Heart right ventricle (tissue), 16 donors: ENCODE measurements at regions of chr20 and their contacts with region 1.

Region 1: DNA sequence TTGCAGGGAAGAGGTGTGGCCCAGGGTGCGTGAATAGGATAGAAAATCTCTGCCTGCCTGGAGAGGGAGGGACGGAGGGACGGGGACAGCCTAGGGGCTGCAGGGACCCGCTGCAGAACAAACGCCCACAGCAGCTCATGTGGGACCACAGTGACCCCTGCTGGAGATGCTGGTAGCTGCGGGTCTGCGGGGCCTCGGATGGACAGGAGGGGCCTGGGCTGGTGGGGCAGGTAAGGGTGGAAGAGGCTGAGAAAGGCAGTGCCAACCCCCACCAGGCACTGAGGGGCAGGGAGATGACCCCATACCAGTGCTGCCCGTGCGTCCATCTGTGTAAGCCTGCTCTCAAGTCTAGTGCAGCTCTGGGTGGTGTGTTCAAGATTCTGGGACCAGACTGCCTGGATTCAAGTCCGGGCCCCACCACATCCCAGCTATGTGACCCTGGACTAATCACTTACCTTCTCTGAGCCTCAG is 39.4 kb downstream of the KIAA1755 start:
- DNase-seq: peak; percentile 58 to 78
- ATAC-seq: peak; percentile 34 to 77 (median 64)
- H3K4me3 ChIP-seq: no peak overlapping the region
- H3K27ac ChIP-seq: no peak overlapping the region
- H3K4me1 ChIP-seq: peaks cover 0 to 22% (median 3%) of the 10 kb centered on the region in 9 donors
- H3K27me3 ChIP-seq: no peaks in the 10 kb centered on the region
- CTCF ChIP-seq: peak; percentile 82 to 94 (median 91)

Region 2: GRCh38 chr20:37651932-37652331 is 569.2 kb before region 1 on chr20:
- intact Hi-C with region 1: loop called in 1 of 10 experiments (anchors 10 kb)
- DNase-seq: peak; percentile 26 to 35
- ATAC-seq: peak; percentile 44 to 91 (median 82)
- H3K4me3 ChIP-seq: no peak overlapping the region
- H3K27ac ChIP-seq: no peak overlapping the region
- H3K4me1 ChIP-seq: peaks cover 0 to 17% (median 7%) of the 10 kb centered on the region in 9 donors
- H3K27me3 ChIP-seq: no peaks in the 10 kb centered on the region
- CTCF ChIP-seq: peak; percentile 7 to 59 (median 42)

Region 3: DNA sequence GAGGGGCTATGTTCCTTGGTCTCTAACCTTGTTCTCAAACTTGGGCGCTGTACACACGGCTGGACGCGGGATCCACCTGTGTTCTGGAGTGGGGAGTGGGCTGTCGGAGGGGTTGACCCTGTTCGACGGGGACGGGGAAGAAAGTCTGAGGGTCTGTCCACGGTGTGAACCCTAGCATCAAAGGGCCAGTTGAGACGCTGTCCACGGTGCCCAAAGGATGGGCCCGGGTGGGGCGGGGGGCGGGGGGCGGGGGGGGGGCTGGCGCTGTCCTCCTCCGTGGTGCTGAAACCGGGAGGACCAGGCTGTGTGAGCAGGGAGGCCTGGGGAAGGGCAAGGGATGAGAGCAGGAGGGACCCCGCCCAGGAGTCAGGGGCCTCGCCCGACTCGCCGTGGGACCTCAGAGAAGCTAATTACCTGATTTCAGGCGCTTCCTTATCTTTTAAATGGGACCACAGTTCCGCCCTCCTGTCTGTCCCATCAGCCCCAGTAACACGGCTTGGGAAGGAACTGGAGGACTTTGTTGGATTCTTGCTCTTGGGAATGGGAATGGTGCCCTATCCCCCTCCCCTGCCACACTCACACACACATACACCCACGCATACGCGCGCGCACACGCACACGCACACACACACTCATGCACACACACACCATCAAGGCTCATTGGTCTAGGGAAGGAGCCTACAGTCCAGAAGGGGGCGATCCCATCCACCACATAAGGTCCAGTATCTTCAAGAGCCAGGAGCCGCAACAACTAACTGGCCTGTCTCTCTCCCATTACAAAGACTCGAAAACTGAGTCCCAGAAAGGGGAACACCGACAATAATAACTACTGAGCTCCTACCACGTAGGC is 319.3 kb before region 1 on chr20:
- intact Hi-C with region 1: loop called in 3 of 10 experiments (anchors 5 to 10 kb)
- DNase-seq: no peak
- ATAC-seq: peak; percentile 47 to 84 (median 71)
- H3K4me3 ChIP-seq: peak overlapping the region in 7 of 10 donors; percentile 36 to 47 (median 41)
- H3K27ac ChIP-seq: no peak overlapping the region
- H3K4me1 ChIP-seq: peaks cover 1 to 24% (median 12%) of the 10 kb centered on the region in 9 donors
- H3K27me3 ChIP-seq: peaks cover 9 to 71% (median 64%) of the 10 kb centered on the region in 7 donors
- CTCF ChIP-seq: peak in 7 of 9 donors; percentile 21 to 52 (median 35)

Region 4: DNA sequence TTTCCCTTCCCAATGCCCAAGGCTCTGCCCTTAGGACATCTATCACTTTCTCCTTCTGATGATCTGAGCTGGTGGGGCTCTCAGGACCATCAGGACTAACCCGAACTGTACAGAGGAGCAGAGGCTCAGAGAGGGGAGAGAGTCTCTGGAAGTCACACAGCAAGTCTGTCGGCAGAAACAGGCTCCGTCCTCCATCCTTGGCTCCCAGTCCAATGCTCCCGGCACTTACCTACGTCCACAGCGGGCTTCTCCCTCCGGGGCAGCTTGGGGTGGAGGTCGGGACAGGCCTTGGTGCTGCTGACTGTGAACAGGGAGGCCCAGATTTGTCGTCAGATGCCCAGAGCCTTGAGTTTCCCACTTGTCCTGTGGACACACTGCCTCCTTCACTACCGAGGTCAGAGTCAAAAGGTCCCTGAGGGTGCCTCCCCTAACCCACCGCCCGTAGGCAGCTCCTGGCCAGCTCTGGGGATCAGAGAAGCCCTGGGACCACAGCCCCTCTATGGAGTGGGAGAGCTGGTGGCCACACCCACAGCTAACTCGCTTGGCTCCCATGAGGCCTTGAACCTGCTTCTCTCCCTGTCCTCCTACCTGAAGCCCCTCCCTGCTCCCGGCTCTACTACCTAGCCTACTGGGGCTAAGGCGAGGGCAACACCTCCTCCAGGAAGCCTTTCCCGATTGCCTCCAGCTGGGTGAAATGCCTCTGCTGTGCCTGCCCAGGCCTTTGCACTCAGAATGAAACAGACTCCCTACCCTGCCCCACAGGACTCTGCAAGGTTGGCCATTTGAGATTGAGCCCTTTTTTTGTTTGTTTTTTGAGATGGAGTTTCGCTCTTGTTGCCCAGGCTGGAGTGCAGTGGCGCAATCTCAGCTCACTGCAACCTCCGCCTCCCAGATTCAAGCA is 295.6 kb before region 1 on chr20:
- intact Hi-C with region 1: no loop called
- DNase-seq: no peak
- ATAC-seq: no peak
- H3K4me3 ChIP-seq: no peak overlapping the region
- H3K27ac ChIP-seq: no peak overlapping the region
- H3K4me1 ChIP-seq: no peaks in the 10 kb centered on the region
- H3K27me3 ChIP-seq: peaks cover 0 to 15% (median 2%) of the 10 kb centered on the region in 7 donors
- CTCF ChIP-seq: no peak

Region 5: GRCh38 chr20:38165089-38165989 is 55.8 kb before region 1 on chr20 and contains the start of gene TGM2:
- intact Hi-C with region 1: loop called in 8 of 10 experiments (anchors 5 kb)
- DNase-seq: peak; percentile 83 to 88
- ATAC-seq: peak; percentile 83 to 93 (median 92)
- H3K4me3 ChIP-seq: peak within 1 kb of the TSS; percentile 47 to 80 (median 68)
- H3K27ac ChIP-seq: peak within 1 kb of the TSS; percentile 71 to 96 (median 90)
- H3K4me1 ChIP-seq: peaks cover 24 to 81% (median 51%) of the 10 kb centered on the region in 9 donors
- H3K27me3 ChIP-seq: no peaks in the 10 kb centered on the region
- CTCF ChIP-seq: peak; percentile 84 to 94 (median 89)
- total RNA-seq, gene TGM2: 279 to 993 (median 472) TPM

Region 6: GRCh38 chr20:38246357-38247165 is 25.4 kb after region 1 on chr20:
- intact Hi-C with region 1: no loop called
- DNase-seq: peak; percentile 32 to 34
- ATAC-seq: peak; percentile 27 to 71 (median 56)
- H3K4me3 ChIP-seq: no peak overlapping the region
- H3K27ac ChIP-seq: peak overlapping the region in 3 of 10 donors; percentile 20 to 26 (median 25)
- H3K4me1 ChIP-seq: peaks cover 0 to 27% (median 12%) of the 10 kb centered on the region in 9 donors
- H3K27me3 ChIP-seq: no peaks in the 10 kb centered on the region
- CTCF ChIP-seq: no peak

Region 7: DNA sequence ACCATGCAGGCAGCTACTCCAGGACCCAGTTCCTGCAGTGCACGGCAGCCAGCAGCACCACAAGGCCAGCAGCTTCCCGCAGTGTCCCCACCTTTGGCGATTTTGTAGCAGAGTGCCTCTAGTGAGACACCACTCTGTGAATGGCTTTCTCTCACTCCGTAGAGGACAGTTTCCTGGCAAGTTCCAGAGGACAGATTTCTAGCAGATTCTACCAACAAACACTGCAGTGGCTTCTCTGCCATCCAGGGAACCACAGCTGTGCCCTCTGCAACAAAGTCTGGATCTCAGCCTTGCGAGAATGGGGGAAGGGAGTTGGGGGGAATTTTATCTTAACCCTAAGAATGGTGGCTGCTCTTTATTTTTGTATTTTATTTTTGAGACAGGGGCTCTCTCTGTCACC is 185.3 kb after region 1 on chr20:
- intact Hi-C with region 1: loop called in 3 of 10 experiments (anchors 10 kb)
- DNase-seq: no peak
- ATAC-seq: no peak
- H3K4me3 ChIP-seq: no peak overlapping the region
- H3K27ac ChIP-seq: no peak overlapping the region
- H3K4me1 ChIP-seq: no peaks in the 10 kb centered on the region
- H3K27me3 ChIP-seq: peaks cover 0 to 7% (median 0%) of the 10 kb centered on the region in 7 donors
- CTCF ChIP-seq: no peak